BJ (cell line): ENCODE measurements at regions of chr17 and their contacts with region 1.

Region 1: DNA sequence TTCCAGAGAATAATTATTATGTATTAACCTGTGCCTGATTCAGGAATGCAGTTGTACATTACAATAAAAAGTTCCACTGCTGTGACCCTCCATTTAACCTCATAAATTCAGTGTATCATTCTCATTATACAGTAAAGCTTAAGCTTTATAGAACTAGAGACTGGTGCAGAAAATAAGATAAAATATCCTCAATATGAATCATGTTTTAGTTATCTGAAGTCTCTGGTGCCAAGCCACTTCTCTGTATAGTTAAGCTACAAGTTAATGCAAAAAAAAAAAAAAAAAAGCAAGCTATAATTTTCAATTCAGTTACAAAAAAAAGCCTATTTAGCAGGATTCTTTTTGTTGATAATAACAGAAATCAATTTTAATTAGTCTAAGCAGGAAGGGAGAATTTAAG is 22.4 kb upstream of the SMIM36 start:
- DNase-seq: no peak
- H3K4me3 ChIP-seq: no peak overlapping the region
- H3K27me3 ChIP-seq: peaks cover 1% of the 10 kb centered on the region; the same call in 1 of the 2 replicates
- CTCF ChIP-seq: no peak

Region 2: GRCh38 chr17:55394357-55395021 is 139.1 kb before region 1 on chr17:
- CTCF ChIA-PET with region 1: no interaction called
- POLR2A ChIA-PET with region 1: no interaction called
- DNase-seq: no peak
- H3K4me3 ChIP-seq: no peak overlapping the region
- H3K27me3 ChIP-seq: no peaks in the 10 kb centered on the region
- CTCF ChIP-seq: no peak

Region 3: GRCh38 chr17:55641676-55642081 is 108.1 kb after region 1 on chr17:
- CTCF ChIA-PET with region 1: interaction called, 59 read pairs
- POLR2A ChIA-PET with region 1: no interaction called
- DNase-seq: no peak
- H3K4me3 ChIP-seq: no peak overlapping the region
- H3K27me3 ChIP-seq: no peaks in the 10 kb centered on the region
- CTCF ChIP-seq: peak; percentile 81